A549 (cell line): ENCODE measurements at regions of chr16 and their contacts with region 1.

Region 1: GRCh38 chr16:88737298-88738150 is 31.2 kb downstream of the CTU2 start:
- DNase-seq: peak; percentile 65 to 85
- ATAC-seq: peak; percentile 52 to 90
- H3K4me3 ChIP-seq: no peak overlapping the region
- H3K27ac ChIP-seq: peak overlapping the region in 1 of 2 experiments; percentile 59; a peak in 1 of 6 replicates
- H3K4me1 ChIP-seq: no peaks in the 10 kb centered on the region
- CTCF ChIP-seq: peak; percentile 98
- EP300 ChIP-seq: no peak
- POLR2A ChIP-seq: no peak
- RAD21 ChIP-seq: peak; percentile 51 to 67; a peak in 4 of 5 replicates

Region 2: GRCh38 chr16:88700636-88701482 is 36.7 kb before region 1 on chr16:
- CTCF ChIA-PET with region 1: interaction called, 49 read pairs
- POLR2A ChIA-PET with region 1: no interaction called
- DNase-seq: no peak
- ATAC-seq: no peak
- H3K4me3 ChIP-seq: no peak overlapping the region
- H3K27ac ChIP-seq: no peak overlapping the region
- H3K4me1 ChIP-seq: peaks cover 7% of the 10 kb centered on the region; the same call in 1 of the 3 replicates
- CTCF ChIP-seq: no peak
- EP300 ChIP-seq: no peak
- POLR2A ChIP-seq: no peak
- RAD21 ChIP-seq: no peak

Region 3: GRCh38 chr16:88713568-88714419 is 23.7 kb before region 1 on chr16:
- CTCF ChIA-PET with region 1: interaction called, 105 read pairs
- POLR2A ChIA-PET with region 1: no interaction called
- DNase-seq: no peak
- ATAC-seq: peak in 1 of 2 experiments; percentile 42; a peak in 3 of 6 replicates
- H3K4me3 ChIP-seq: no peak overlapping the region
- H3K27ac ChIP-seq: no peak overlapping the region
- H3K4me1 ChIP-seq: no peaks in the 10 kb centered on the region
- CTCF ChIP-seq: no peak
- EP300 ChIP-seq: no peak
- POLR2A ChIP-seq: no peak
- RAD21 ChIP-seq: no peak

Region 4: DNA sequence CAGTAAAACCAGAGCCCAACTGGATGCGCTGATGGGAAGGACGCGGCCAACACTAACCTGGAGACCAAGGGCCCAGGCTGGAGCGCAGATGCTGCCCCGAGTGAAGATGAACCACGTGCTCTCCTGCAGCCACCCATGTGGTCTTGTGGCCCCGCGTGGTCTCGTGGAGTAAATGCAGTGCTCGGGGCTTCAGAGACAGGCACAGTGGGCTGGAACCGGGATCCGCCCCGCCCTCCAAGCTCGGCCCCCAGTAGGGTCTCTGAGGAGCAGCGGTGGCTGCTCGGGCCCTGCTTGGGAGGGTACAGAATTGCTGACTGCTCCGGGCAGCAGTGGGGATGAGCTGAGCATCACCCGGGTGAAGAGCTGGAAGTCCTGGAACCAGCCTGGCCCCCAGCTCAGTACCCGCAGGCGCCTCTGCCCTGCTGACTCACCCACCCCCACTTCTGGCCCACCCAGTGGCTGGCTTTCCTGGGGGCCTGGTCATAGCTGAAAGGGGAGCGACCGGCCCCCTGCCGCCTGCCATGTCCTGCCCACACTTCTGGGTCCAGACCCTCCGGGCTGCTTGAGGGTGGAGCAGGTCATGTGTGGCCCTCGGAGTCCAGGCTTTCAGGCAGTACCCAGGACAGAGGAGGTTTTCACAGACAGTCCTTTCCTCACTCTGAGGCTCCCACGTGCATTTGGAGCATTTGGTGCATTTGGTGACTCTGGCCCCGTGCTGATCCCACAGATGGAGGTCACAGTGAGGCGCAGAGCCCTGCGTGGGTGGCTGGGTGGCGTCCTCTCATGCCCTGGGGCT is 54.4 kb after region 1 on chr16:
- CTCF ChIA-PET with region 1: interaction called, 15 read pairs
- POLR2A ChIA-PET with region 1: no interaction called
- DNase-seq: no peak
- ATAC-seq: peak; percentile 36 to 45; a peak in 4 of 6 replicates
- H3K4me3 ChIP-seq: no peak overlapping the region
- H3K27ac ChIP-seq: no peak overlapping the region
- H3K4me1 ChIP-seq: no peaks in the 10 kb centered on the region
- CTCF ChIP-seq: no peak
- EP300 ChIP-seq: no peak
- POLR2A ChIP-seq: no peak
- RAD21 ChIP-seq: no peak

Region 5: DNA sequence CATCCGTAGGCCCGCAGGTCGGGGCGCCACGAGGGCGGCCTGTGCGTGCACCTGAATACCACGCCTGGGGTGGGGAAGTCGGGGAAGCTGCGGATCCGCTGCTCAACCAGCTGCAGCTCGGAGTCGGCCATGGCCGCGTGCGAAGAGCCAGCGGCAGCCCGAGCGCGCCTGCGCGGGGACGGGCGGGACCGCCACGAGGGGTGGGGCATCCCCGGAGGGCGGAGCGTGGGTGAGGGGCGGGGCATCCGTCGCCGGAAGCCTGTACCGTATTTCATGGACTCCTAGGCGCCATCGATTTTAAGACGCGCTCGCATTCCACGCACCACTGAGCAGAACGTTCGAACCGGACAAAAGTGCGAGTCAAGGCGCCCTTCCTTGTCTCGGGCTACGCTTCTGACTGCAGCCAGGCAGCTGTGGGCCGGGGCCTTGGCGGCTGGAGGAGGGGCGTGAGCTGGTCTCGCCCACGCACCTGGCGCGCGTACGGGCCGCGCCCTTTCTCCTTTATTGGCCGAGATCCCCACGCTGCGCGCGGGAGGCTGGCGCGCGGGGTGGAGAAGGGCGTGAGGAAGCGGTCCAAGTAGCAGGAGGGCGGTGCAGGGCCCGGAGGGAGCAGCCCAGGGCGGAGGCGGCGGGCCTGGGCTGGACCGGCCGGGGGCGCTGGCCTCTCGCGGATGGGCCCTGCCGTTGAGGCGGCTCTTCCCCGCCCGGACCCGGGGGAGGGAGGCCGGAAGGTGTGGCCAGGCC is 74.4 kb after region 1 on chr16 and contains the start of gene APRT:
- CTCF ChIA-PET with region 1: interaction called, 10 read pairs
- POLR2A ChIA-PET with region 1: interaction called, 3 read pairs
- DNase-seq: peak; percentile 78 to 95
- ATAC-seq: peak; percentile 64 to 74
- H3K4me3 ChIP-seq: peak within 1 kb of the TSS; percentile 83
- H3K27ac ChIP-seq: peak within 1 kb of the TSS; percentile 98 to 99
- H3K4me1 ChIP-seq: peaks cover 21% of the 10 kb centered on the region
- CTCF ChIP-seq: peak; percentile 33; the same call in 2 of the 3 replicates
- EP300 ChIP-seq: no peak
- POLR2A ChIP-seq: peak; percentile 83
- RAD21 ChIP-seq: peak; percentile 31 to 44; a peak in 3 of 5 replicates
- polyA plus RNA-seq, gene APRT: 113 and 115 TPM in 2 replicates